ENCODE measurements at regions of chr3 and their contacts with region 1.

Region 1: GRCh38 chr3:12135029-12135657 is 23.6 kb downstream of the TIMP4 start:
- DNase-seq: no peak
- H3K4me3 ChIP-seq: no peak overlapping the region
- H3K27me3 ChIP-seq: peaks cover 6% of the 10 kb centered on the region; the same call in 1 of the 2 replicates
- CTCF ChIP-seq: peak; percentile 94

Region 2: GRCh38 chr3:12120374-12121140 is 14.6 kb before region 1 on chr3:
- CTCF ChIA-PET with region 1: interaction called, 19 read pairs
- POLR2A ChIA-PET with region 1: no interaction called
- DNase-seq: no peak
- H3K4me3 ChIP-seq: no peak overlapping the region
- H3K27me3 ChIP-seq: 0 out of 2 replicates have a peak, but pooled peaks cover 2% of the 10 kb centered on the region
- CTCF ChIP-seq: no peak

Region 3: DNA sequence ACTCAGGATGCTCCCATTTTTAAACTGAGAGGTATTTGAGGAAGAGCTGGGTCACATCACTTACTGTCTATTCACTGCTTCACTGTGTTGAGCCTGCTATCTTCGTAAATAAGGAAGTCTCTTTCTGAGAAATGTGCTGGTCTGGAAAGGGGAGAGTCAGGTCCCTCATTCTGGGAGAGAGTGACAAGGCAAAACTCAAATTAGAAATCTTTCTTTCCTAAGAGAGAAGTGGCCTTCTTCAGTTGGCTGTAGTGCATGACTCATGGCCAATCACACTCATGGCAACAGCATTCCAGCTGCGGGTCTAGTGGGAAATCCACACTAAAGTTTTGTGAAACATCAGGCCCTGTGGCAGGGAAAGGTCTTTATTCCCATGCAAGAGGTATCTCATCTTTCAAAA is 35.1 kb after region 1 on chr3:
- CTCF ChIA-PET with region 1: interaction called, 162 read pairs
- POLR2A ChIA-PET with region 1: no interaction called
- DNase-seq: no peak
- H3K4me3 ChIP-seq: no peak overlapping the region
- H3K27me3 ChIP-seq: peaks cover 4% of the 10 kb centered on the region
- CTCF ChIP-seq: no peak

Region 4: DNA sequence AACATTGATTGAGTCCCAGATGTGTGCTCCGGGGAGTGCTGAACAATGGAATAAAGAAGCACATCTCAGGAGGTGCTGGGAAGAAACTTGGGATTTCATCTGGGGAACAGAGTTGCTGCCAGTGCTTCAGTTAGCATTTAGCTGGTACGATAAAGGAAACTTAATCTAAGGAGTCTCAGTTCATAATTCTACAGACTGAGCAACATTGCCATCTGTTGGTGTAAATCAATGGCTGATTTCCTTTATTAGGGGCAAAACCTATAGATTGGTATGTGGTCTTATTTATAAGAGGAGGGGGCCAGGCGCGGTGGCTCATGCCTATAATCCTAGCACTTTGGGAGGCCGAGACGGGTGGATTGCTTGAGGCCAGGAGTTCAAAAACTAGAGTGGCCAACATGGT is 401.3 kb after region 1 on chr3:
- CTCF ChIA-PET with region 1: interaction called, 24 read pairs
- POLR2A ChIA-PET with region 1: no interaction called
- DNase-seq: no peak
- H3K4me3 ChIP-seq: no peak overlapping the region
- H3K27me3 ChIP-seq: no peaks in the 10 kb centered on the region; the same call in 1 of the 2 replicates
- CTCF ChIP-seq: peak; percentile 30; the same call in 1 of the 2 replicates

Measured in BJ (cell line).